HepG2 (cell line): ENCODE measurements at regions of chr12 and their contacts with region 1.

Region 1: GRCh38 chr12:63276537-63277365 is 125.8 kb upstream of the AVPR1A start:
- DNase-seq: peak; percentile 44
- ATAC-seq: peak; percentile 94
- H3K4me3 ChIP-seq: no peak overlapping the region; a peak in 1 of 6 replicates
- H3K27ac ChIP-seq: no peak overlapping the region
- H3K4me1 ChIP-seq: no peaks in the 10 kb centered on the region
- H3K27me3 ChIP-seq: no peaks in the 10 kb centered on the region
- CTCF ChIP-seq: peak; percentile 69
- EP300 ChIP-seq: no peak
- POLR2A ChIP-seq: no peak
- RAD21 ChIP-seq: no peak

Region 2: DNA sequence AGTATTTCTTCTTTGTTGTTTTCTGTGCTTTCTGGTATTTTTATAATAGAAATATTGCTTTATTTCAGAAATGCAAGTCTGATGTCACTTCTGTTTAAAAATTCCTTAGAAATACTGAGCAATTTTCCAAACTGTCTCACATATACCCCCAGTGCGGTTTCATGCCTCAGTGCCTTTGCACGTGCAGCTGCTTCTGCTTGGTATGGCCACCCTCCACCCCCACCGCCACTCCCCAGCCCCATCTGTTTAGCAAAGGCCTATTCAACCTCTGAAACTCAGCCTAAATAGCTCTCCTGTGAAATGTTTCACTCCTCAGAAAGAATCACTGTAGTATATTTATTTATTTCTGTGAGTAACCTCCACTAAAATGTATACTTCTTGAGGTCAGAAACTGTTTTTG is 394.1 kb before region 1 on chr12:
- CTCF ChIA-PET with region 1: no interaction called
- POLR2A ChIA-PET with region 1: no interaction called
- in situ Hi-C with region 1: no loop called
- intact Hi-C with region 1: no loop called
- DNase-seq: no peak
- ATAC-seq: no peak
- H3K4me3 ChIP-seq: no peak overlapping the region
- H3K27ac ChIP-seq: no peak overlapping the region
- H3K4me1 ChIP-seq: peaks cover 21% of the 10 kb centered on the region; the same call in 1 of the 2 replicates
- H3K27me3 ChIP-seq: no peaks in the 10 kb centered on the region
- CTCF ChIP-seq: no peak
- EP300 ChIP-seq: no peak
- POLR2A ChIP-seq: no peak
- RAD21 ChIP-seq: no peak

Region 3: GRCh38 chr12:63103494-63104131 is 173.1 kb before region 1 on chr12:
- CTCF ChIA-PET with region 1: interaction called, 5 read pairs
- POLR2A ChIA-PET with region 1: no interaction called
- in situ Hi-C with region 1: no loop called
- intact Hi-C with region 1: loop called (anchors 1 kb)
- DNase-seq: peak; percentile 15
- ATAC-seq: no peak
- H3K4me3 ChIP-seq: no peak overlapping the region
- H3K27ac ChIP-seq: no peak overlapping the region
- H3K4me1 ChIP-seq: no peaks in the 10 kb centered on the region
- H3K27me3 ChIP-seq: peaks cover 0 to 6% of the 10 kb centered on the region in 2 experiments; a peak in 2 of 5 replicates
- CTCF ChIP-seq: peak; percentile 72
- EP300 ChIP-seq: no peak
- POLR2A ChIP-seq: no peak
- RAD21 ChIP-seq: 0 out of 2 replicates have a peak, but pooled peaks have one; percentile 16

Region 4: GRCh38 chr12:63151623-63152320 is 125.0 kb before region 1 on chr12:
- CTCF ChIA-PET with region 1: interaction called, 9 read pairs
- POLR2A ChIA-PET with region 1: no interaction called
- in situ Hi-C with region 1: no loop called
- intact Hi-C with region 1: loop called (anchors 1 kb)
- DNase-seq: peak; percentile 32
- ATAC-seq: peak; percentile 97
- H3K4me3 ChIP-seq: 0 out of 6 replicates have a peak overlapping the region, but pooled peaks of 1 of the 3 experiments have one; percentile 19
- H3K27ac ChIP-seq: no peak overlapping the region
- H3K4me1 ChIP-seq: peaks cover 7% of the 10 kb centered on the region; the same call in 1 of the 2 replicates
- H3K27me3 ChIP-seq: peaks cover 0 to 16% of the 10 kb centered on the region in 2 experiments; a peak in 3 of 5 replicates
- CTCF ChIP-seq: peak; percentile 75
- EP300 ChIP-seq: no peak
- POLR2A ChIP-seq: no peak
- RAD21 ChIP-seq: no peak